Spleen (tissue), 13 donors: ENCODE measurements at regions of chr1 and their contacts with region 1.

Region 1: DNA sequence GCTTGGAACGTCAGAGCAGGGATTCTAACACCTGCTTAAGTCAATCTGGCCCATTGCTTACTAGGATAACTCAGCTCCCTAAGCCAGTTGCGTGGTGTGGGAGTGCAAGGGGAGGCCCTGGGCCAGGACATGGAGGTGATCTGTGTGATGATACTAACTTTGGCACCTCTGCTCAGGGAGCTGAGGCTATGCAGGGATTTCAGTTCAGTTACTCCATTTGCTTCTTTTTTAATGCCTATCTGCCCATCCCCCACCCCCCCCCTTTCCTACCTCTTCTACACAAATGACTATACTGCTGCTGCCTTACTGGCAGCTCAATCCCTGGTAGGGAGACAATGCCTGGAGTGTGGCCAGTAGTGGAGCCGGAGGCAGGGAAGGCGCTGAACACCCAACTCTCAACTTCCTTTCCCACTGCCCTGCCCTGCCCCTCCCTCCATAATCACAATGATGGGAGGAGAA is 19.5 kb downstream of the INKA2 start:
- DNase-seq: no peak
- H3K4me3 ChIP-seq: peak overlapping the region in 1 of 8 donors; percentile 35
- H3K27ac ChIP-seq: peak overlapping the region in 4 of 8 donors; percentile 63 to 93 (median 84)
- H3K4me1 ChIP-seq: peaks cover 0 to 57% (median 20%) of the 10 kb centered on the region in 6 donors
- H3K27me3 ChIP-seq: no peaks in the 10 kb centered on the region
- CTCF ChIP-seq: no peak
- POLR2A ChIP-seq: no peak

Region 2: DNA sequence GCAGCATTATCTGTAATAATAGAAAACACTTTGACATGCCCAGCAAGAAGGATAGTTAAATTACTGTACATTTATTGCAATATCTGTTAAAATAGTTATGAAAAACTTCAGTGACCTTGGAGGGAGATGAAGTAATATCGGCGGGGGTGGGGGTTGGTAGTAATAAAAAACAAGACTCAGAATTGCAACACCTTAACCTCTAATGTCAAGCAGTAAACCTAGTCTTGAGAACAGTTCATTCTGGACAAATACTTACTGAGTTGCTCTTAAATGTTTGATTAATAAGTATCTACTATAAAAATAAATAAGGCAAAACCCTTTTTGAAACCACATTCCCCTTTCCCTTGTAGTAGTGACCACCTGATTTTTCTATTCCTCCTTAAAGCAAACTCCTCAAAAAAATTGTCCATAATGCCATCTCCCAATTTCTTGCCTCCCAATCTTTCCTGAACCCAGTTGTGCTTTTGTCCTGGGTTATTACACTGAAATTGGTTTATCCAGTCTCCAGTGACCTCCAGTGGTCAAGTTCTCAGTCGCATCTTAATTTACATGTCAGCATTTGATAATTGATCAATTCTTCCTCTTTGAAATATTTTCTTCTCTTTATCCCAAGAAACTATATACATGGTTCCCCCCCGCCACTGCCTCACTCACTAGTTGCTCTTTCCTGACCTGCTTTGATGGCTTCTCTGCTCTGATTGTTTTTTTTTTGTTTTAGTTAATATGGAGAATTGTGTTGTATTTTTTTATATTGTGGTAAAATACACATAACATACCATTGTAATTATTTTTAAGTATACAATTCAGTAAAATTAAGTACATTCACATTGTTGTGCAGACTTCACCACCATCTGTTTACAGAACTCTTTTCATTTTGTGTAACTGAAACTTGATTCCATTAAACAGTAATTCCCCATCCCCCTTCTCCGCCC is 63.4 kb before region 1 on chr1:
- intact Hi-C with region 1: no loop called
- DNase-seq: no peak
- H3K4me3 ChIP-seq: no peak overlapping the region
- H3K27ac ChIP-seq: peak overlapping the region in 6 of 8 donors; percentile 19 to 70 (median 52)
- H3K4me1 ChIP-seq: peaks cover 39 to 99% (median 82%) of the 10 kb centered on the region in 6 donors
- H3K27me3 ChIP-seq: no peaks in the 10 kb centered on the region
- CTCF ChIP-seq: peak in 9 of 11 experiments; percentile 20 to 74 (median 56)
- POLR2A ChIP-seq: no peak

Region 3: GRCh38 chr1:111755331-111756123 is 35.8 kb after region 1 on chr1 and contains the start of gene DDX20:
- intact Hi-C with region 1: loop called (anchors 5 kb)
- DNase-seq: peak; percentile 99
- H3K4me3 ChIP-seq: peak within 1 kb of the TSS; percentile 67 to 96 (median 81)
- H3K27ac ChIP-seq: peak within 1 kb of the TSS; percentile 87 to 97 (median 95)
- H3K4me1 ChIP-seq: peaks cover 14 to 42% (median 24%) of the 10 kb centered on the region in 6 donors
- H3K27me3 ChIP-seq: no peaks in the 10 kb centered on the region
- CTCF ChIP-seq: peak; percentile 87 to 98 (median 94)
- POLR2A ChIP-seq: peak in 2 of 3 donors; percentile 26 to 52
- total RNA-seq, gene DDX20: 12.2 to 40.3 (median 16.1) TPM